G401 (cell line): ENCODE measurements at regions of chr22 and their contacts with region 1.

Region 1: GRCh38 chr22:31173386-31174145 is 13.6 kb downstream of the RNF185 start:
- DNase-seq: no peak

Region 2: GRCh38 chr22:30902496-30903357 is 270.8 kb before region 1 on chr22:
- in situ Hi-C with region 1: no loop called
- DNase-seq: no peak

Region 3: GRCh38 chr22:30955153-30955552 is 218.4 kb before region 1 on chr22:
- in situ Hi-C with region 1: no loop called
- DNase-seq: no peak

Region 4: DNA sequence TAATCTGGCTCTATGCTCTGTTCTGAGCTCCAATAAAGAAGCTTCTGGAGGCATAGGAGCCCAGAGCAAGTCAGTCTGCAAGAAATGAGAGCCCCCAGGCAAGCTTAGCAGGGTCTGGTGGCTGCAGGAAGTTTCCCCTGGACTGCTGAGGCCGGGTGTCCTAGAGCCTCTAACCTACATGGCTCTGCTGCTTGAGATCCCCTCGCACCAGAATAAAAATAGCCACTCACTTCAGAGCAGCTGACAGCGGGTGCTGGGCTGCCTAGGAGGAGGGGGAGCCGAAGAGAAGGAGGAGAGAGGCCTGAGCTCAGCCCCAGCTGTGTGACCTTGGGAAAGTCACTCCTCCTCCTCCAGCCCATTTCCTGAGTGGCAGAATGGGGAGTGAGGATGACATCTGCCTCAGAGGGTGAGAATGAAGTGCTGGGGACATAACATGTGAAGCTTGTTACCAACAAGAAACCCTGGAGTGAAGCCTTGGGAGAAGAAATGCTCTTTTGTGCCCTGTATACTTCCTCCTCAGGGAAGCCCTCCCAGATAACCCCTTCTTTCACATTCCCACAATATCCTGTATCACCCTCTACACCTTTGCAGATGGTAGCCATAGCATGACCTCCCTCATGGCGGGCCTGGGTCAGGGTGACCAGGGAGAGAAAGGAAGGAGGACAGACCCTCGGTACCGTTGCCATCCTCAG is 54.4 kb before region 1 on chr22:
- in situ Hi-C with region 1: loop called (anchors 5 kb)
- DNase-seq: no peak